ENCODE measurements at regions of chr4 and their contacts with region 1.

Region 1: GRCh38 chr4:52659001-52659721 is at the start of gene USP46:
- DNase-seq: peak; percentile 38
- H3K4me3 Mint-ChIP-seq: peak within 1 kb of the TSS; percentile 76
- H3K27ac Mint-ChIP-seq: no peak within 1 kb of the TSS
- H3K4me1 Mint-ChIP-seq: peaks cover 10% of the 10 kb centered on the region
- H3K27me3 Mint-ChIP-seq: peaks cover 29% of the 10 kb centered on the region
- total RNA-seq, gene USP46: 1.7 to 1.9 TPM

Region 2: GRCh38 chr4:52643785-52644244 is 15.3 kb before region 1 on chr4:
- CTCF ChIA-PET with region 1: no interaction called
- intact Hi-C with region 1: loop called (anchors 1 kb)
- DNase-seq: no peak
- H3K4me3 Mint-ChIP-seq: no peak overlapping the region
- H3K27ac Mint-ChIP-seq: no peak overlapping the region
- H3K4me1 Mint-ChIP-seq: peaks cover 12% of the 10 kb centered on the region
- H3K27me3 Mint-ChIP-seq: no peaks in the 10 kb centered on the region

Region 3: DNA sequence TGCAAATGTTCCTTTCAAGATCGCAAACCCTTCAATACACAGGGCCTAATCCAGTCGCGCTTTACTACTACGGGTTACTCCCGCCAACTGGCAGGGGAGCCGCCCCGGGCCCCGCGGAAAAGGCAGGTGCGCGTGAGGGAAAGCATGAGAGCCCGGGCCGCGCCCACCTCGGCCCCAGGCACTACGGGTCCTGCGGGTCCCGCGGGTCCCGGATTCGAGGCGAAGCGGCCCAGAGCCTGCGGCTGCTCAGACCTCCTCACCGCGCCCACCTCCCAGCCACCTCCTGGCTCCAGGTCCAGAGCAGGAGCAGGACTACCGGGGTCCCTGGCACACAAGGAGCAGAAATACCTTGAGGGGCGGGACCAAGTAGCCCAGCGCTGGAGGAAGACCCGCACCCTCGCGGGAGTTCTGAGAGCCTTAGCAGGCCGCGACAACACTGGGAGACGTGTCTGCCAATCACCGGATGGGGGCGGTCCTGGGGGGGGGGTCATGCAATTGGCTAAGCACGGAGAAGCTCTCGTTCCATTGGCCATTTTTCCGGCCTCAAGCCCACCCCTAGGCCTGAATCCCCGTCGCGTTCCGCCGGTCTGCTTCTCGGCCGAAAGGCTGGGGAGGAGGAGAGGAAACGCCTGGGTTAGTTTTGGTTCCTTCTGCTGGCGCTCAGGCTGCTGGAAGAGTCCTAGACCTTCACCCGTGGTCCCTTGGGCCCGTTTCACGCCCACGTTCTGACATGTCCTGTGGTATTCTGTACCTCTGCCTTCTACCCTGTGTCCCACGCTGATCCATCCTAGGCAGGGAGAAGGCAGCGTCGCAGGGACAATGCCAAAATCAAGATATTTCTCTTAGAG is 63.0 kb after region 1 on chr4:
- CTCF ChIA-PET with region 1: no interaction called
- intact Hi-C with region 1: loop called (anchors 2 kb)
- DNase-seq: peak; percentile 95
- H3K4me3 Mint-ChIP-seq: peak overlapping the region; percentile 79
- H3K27ac Mint-ChIP-seq: peak overlapping the region; percentile 76
- H3K4me1 Mint-ChIP-seq: peaks cover 11% of the 10 kb centered on the region
- H3K27me3 Mint-ChIP-seq: peaks cover 3% of the 10 kb centered on the region

Region 4: GRCh38 chr4:52861879-52862616 is 202.9 kb after region 1 on chr4 and contains the start of gene RASL11B:
- CTCF ChIA-PET with region 1: no interaction called
- intact Hi-C with region 1: loop called (anchors 5 kb)
- DNase-seq: peak; percentile 79
- H3K4me3 Mint-ChIP-seq: peak within 1 kb of the TSS; percentile 69
- H3K27ac Mint-ChIP-seq: no peak within 1 kb of the TSS
- H3K4me1 Mint-ChIP-seq: peaks cover 3% of the 10 kb centered on the region
- H3K27me3 Mint-ChIP-seq: peaks cover 22% of the 10 kb centered on the region
- total RNA-seq, gene RASL11B: 0.24 TPM in 1 of 2 experiments, not detected in the other